ENCODE measurements at regions of chrX and their contacts with region 1.

Region 1: DNA sequence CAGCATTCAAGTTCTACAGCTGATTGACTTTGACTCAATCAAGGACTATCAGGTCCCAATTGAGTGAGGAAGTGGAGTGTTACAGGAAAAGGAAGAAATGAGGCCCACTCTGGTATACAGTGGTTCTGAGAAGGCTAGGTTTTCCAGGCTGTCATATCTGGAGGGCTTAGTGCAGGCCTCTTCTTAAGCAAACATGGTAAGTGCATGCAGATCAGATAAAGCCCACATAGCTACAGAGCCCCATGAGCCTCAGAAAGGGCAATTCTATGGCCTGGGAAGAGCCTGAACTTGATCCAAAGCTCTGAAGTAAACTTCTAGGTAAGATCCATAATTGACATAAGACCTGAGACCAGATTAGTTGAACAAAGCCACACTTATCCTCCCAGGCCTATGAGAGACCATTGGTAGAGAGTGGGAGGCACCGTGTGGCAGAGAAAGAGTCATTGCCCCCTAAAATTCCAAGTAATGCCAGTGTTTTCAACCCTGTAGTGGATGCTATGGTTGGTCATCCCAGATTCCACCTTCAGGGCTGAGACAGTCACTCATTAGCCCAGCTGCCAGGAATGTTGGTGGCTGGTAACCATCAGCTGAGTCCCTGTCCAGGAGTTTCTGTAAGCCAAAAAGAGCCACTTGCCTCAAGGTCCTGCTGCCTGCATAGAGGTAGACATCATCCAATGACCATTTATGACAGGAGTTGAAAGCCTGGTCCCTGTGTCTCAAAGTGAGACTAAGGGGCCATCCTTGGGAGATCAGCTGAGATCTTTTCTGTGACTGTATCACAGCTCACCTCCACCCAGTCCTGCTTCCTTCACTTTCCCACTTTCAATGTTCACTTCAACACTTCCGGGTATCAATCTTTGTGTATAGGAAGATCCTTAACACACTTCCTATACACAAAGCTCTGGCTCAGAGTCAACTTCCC is 28.7 kb upstream of the MAOA start:
- DNase-seq: peak; percentile 12
- H3K4me3 Mint-ChIP-seq: no peak overlapping the region
- H3K27ac Mint-ChIP-seq: peak overlapping the region; percentile 81
- H3K4me1 Mint-ChIP-seq: peaks cover 28% of the 10 kb centered on the region
- H3K27me3 Mint-ChIP-seq: peaks cover 1% of the 10 kb centered on the region

Region 2: DNA sequence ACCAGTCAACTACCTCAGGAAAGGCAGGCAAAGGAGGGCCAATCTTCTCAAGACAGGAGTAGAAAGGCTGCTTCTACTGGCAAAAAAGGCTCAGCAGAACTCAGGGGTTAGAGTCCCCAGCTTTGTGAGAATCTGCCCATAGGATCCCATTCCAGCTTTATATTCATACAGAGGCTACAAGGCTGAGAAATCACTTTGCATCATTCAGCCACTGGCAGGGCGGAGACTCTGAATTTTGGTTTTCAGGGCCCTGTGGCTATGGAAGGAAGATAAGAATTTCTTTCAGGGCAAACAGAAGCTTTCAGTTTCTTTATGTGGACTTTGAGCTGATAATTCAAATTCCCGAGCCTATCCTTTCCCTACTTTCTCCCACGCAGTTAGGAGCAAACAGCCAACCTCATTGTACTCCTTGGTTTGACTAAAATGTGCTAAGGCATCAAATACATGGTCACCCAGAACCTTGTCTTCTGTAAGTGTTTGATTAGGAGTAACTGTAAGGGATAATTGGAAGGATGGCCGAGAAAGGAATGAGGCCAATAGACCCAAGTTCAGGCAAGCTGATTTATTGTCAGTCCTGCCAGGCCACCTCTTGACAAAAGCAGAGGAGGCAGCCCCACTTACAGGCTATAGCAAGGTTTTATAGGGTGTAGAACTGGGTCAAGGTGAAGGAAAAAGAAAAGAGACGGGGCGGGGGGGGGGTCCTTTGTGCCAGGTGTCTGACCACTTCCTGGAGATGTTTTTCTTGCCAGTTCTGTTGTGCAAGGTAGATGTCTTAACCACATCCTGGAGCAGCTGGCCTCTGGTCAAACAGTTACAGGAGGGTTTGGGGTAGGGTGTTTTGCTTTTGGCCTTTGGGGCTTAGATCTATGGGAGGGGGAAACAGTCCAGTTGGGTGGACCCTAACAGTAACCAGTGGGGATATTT is 684.1 kb before region 1 on chrX:
- CTCF ChIA-PET with region 1: no interaction called
- POLR2A ChIA-PET with region 1: no interaction called
- intact Hi-C with region 1: no loop called
- DNase-seq: peak; percentile 52
- H3K4me3 Mint-ChIP-seq: peak overlapping the region; percentile 16
- H3K27ac Mint-ChIP-seq: peak overlapping the region; percentile 95
- H3K4me1 Mint-ChIP-seq: peaks cover 75% of the 10 kb centered on the region
- H3K27me3 Mint-ChIP-seq: no peaks in the 10 kb centered on the region

Region 3: DNA sequence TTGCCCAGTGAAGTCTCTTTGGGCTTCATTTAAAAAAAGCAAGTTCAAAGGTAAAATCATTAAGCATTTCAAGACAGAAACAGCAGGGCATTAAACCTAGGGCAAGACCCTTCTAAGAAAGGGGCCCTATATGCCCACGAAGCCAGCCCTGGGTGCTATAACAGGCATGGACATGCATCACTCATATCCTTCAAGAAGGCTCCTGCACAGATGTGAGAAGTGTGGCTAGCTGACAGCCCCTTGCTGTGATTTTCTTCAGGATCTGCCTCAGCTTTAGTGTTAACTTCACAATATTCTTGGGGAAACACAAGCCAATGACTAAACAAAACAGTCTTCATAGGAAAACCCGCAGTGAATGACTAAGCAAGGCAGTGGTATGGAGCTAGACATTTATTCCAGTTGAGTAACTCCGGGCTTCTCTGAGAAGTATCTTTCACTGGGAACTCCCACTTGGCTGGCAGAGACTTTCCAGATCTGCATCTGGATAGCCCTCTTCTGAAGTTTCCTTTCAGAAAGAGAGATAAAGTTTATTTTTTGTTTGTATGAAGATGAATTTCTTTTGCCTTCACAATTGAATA is 16.8 kb after region 1 on chrX:
- CTCF ChIA-PET with region 1: no interaction called
- POLR2A ChIA-PET with region 1: no interaction called
- intact Hi-C with region 1: loop called (anchors 1 kb)
- DNase-seq: peak; percentile 13
- H3K4me3 Mint-ChIP-seq: no peak overlapping the region
- H3K27ac Mint-ChIP-seq: peak overlapping the region; percentile 69
- H3K4me1 Mint-ChIP-seq: peaks cover 13% of the 10 kb centered on the region
- H3K27me3 Mint-ChIP-seq: peaks cover 3% of the 10 kb centered on the region